Heart right ventricle (tissue), 16 donors: ENCODE measurements at regions of chr12 and their contacts with region 1.

Region 1: GRCh38 chr12:20549107-20549719 is 145.9 kb upstream of the SLCO1C1 start:
- DNase-seq: peak in 1 of 2 donors; percentile 33
- ATAC-seq: peak in 6 of 8 donors; percentile 42 to 79 (median 66)
- H3K4me3 ChIP-seq: no peak overlapping the region
- H3K27ac ChIP-seq: peak overlapping the region in 6 of 10 donors; percentile 28 to 59 (median 52)
- H3K4me1 ChIP-seq: peaks cover 0 to 61% (median 35%) of the 10 kb centered on the region in 9 donors
- H3K27me3 ChIP-seq: no peaks in the 10 kb centered on the region
- CTCF ChIP-seq: peak; percentile 36 to 69 (median 56)

Region 2: GRCh38 chr12:20398686-20399085 is 150.5 kb before region 1 on chr12:
- intact Hi-C with region 1: loop called in 1 of 10 experiments (anchors 10 kb)
- DNase-seq: no peak
- ATAC-seq: no peak
- H3K4me3 ChIP-seq: no peak overlapping the region
- H3K27ac ChIP-seq: peak overlapping the region in 5 of 10 donors; percentile 1 to 88 (median 68)
- H3K4me1 ChIP-seq: peaks cover 0 to 66% (median 26%) of the 10 kb centered on the region in 9 donors
- H3K27me3 ChIP-seq: no peaks in the 10 kb centered on the region
- CTCF ChIP-seq: no peak

Region 3: DNA sequence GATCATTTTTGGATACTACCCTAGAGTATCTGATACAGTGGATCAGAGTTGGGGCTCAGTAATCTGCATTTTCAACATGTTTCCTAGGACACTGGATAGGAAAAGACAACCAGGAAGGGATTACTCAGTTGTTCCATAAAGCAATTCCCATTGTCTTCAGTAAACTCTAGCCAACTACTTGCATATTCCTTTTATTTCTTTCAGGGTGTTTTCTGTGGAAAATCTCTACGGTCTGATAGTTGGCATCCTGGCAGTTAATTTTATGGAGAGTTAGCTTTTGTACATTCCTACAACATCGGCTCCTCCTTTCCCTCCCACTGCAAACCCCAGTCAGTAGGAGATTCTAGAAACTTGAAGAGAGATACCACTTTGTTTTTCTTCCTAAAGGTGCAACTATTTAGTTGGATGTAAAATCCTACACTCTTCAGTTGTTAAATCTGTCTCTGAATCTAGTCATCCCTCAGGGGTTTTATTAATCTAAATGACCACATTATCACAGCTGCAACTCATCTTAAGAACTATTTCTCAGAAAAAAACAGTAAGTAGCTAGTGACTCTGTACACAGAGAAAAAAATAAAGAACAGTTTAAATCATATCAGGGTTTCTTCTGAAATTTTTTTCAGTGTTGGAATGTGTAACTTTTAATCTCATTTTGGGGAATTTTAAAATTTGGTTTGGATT is 77.0 kb before region 1 on chr12:
- intact Hi-C with region 1: loop called in 2 of 10 experiments (anchors 5 to 10 kb)
- DNase-seq: no peak
- ATAC-seq: peak in 4 of 8 donors; percentile 4 to 24 (median 14)
- H3K4me3 ChIP-seq: no peak overlapping the region
- H3K27ac ChIP-seq: peak overlapping the region in 6 of 10 donors; percentile 24 to 66 (median 38)
- H3K4me1 ChIP-seq: peaks cover 9 to 96% (median 65%) of the 10 kb centered on the region in 9 donors
- H3K27me3 ChIP-seq: no peaks in the 10 kb centered on the region
- CTCF ChIP-seq: no peak

Region 4: DNA sequence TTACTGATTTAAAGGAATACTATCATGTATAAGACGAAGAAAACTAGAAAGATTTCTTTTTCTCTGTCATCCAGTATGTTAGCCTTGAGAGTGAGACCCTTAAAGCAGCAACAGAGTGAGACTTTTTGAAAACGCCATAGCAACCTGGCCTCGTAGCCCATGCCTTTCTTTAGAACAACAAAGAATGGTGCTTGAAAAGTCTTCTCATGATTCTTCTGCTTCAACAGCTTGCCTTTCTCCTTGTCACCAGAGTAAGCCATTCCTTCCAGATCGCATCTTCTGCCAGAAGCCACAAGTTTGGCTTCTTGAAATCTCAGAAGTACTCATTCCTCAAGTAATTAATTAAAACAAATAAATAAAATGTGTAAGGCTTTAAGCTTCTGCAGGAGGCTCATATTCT is 71.5 kb before region 1 on chr12:
- intact Hi-C with region 1: loop called in 2 of 10 experiments (anchors 5 to 10 kb)
- DNase-seq: no peak
- ATAC-seq: peak in 3 of 8 donors; percentile 13 to 38 (median 34)
- H3K4me3 ChIP-seq: no peak overlapping the region
- H3K27ac ChIP-seq: peak overlapping the region in 3 of 10 donors; percentile 1 to 12 (median 2)
- H3K4me1 ChIP-seq: peaks cover 9 to 78% (median 44%) of the 10 kb centered on the region in 9 donors
- H3K27me3 ChIP-seq: no peaks in the 10 kb centered on the region
- CTCF ChIP-seq: no peak

Region 5: DNA sequence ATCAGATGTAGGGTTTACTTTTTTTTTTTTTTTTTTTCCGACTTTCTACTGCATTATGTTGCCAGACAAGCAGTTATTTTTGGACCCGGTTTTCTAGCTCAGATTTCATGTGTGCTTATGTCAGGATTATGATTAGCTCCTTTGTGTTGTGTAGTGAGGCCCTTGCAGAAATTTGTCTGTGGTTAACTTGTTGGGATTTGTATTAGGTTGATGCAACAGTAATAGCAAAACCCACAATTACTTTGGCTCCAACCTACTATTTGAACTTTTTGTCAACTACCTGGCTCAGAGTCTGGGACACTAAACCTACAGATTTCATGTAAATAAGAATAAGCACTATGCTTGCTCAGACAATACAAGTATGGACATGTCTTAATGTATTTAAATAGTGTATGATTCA is 1269.4 kb after region 1 on chr12:
- intact Hi-C with region 1: no loop called
- DNase-seq: no peak
- ATAC-seq: peak in 5 of 8 donors; percentile 40 to 67 (median 48)
- H3K4me3 ChIP-seq: no peak overlapping the region
- H3K27ac ChIP-seq: peak overlapping the region in 5 of 10 donors; percentile 6 to 63 (median 55)
- H3K4me1 ChIP-seq: peaks cover 0 to 54% (median 12%) of the 10 kb centered on the region in 9 donors
- H3K27me3 ChIP-seq: no peaks in the 10 kb centered on the region
- CTCF ChIP-seq: no peak